Heart right ventricle (tissue), 16 donors: ENCODE measurements at regions of chr12 and their contacts with region 1.

Region 1: DNA sequence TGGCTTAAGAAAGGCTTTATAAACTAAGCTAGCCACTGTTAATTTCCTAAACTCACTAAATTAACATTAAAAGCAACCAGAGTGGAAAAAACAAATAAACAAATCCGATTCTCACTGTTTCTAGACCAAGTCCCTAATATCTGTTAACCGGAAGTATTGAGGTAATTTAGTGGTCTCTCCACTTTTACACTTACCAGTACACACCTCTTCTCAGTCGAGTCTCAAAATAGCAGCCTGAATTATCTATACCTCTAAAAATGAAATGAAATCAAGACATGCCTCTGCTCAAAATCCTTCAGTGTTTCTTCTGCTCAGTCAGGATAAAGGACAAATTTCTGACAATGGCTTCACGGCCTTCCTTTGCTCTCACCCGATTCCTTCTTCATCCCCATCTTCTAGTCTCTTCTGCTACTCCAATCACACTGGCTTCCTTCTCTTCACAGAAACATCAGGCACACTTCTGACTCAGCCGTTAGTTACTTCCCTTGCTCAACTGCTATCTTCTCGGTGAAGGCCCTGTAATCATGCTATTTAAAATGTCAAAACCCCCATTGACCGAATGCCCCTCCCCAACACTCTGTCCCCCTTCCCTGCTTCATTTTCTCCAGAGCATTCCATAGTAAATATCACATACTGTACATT is 161.3 kb downstream of the KITLG start:
- DNase-seq: no peak
- ATAC-seq: no peak
- H3K4me3 ChIP-seq: no peak overlapping the region
- H3K27ac ChIP-seq: no peak overlapping the region
- H3K4me1 ChIP-seq: peaks cover 0 to 17% (median 0%) of the 10 kb centered on the region in 9 donors
- H3K27me3 ChIP-seq: no peaks in the 10 kb centered on the region
- CTCF ChIP-seq: no peak

Region 2: DNA sequence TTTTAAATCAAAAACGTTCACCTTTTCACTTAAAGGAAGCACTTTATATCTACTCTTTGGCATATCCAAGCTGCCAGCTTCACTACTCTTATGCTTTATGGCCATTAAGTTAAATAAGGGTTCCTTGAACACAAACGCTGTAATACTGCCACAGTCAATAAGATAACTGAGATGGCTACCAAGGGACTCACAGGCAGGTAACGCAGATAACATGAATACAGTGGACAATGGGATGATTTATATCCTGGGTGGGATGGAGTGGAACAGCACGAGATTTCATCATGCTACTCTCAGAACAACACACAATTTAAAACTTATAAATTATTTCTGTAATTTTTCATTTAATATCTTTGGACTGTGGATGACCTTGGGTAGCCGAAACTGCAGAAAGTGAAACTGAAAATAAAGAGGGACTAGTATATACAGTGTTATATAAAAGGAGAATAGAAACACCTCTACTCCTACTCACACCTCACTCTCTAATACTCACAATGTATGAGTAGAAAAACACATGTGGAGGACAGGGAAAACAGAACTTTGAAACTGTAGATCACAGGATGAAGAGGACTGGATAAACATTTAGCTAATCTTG is 757.1 kb before region 1 on chr12:
- intact Hi-C with region 1: no loop called
- DNase-seq: no peak
- ATAC-seq: no peak
- H3K4me3 ChIP-seq: peak overlapping the region in 2 of 10 donors; percentile 4 to 12
- H3K27ac ChIP-seq: no peak overlapping the region
- H3K4me1 ChIP-seq: no peaks in the 10 kb centered on the region
- H3K27me3 ChIP-seq: no peaks in the 10 kb centered on the region
- CTCF ChIP-seq: no peak

Region 3: GRCh38 chr12:88310069-88310468 is 108.9 kb before region 1 on chr12:
- intact Hi-C with region 1: loop called in 1 of 10 experiments (anchors 5 kb)
- DNase-seq: peak in 1 of 2 donors; percentile 31
- ATAC-seq: peak in 7 of 8 donors; percentile 51 to 90 (median 72)
- H3K4me3 ChIP-seq: no peak overlapping the region
- H3K27ac ChIP-seq: peak overlapping the region in 9 of 10 donors; percentile 3 to 70 (median 47)
- H3K4me1 ChIP-seq: peaks cover 0 to 48% (median 10%) of the 10 kb centered on the region in 9 donors
- H3K27me3 ChIP-seq: no peaks in the 10 kb centered on the region
- CTCF ChIP-seq: no peak

Region 4: GRCh38 chr12:88393017-88393767 is 25.8 kb before region 1 on chr12:
- intact Hi-C with region 1: no loop called
- DNase-seq: no peak
- ATAC-seq: peak in 1 of 8 donors; percentile 25
- H3K4me3 ChIP-seq: no peak overlapping the region
- H3K27ac ChIP-seq: no peak overlapping the region
- H3K4me1 ChIP-seq: no peaks in the 10 kb centered on the region
- H3K27me3 ChIP-seq: no peaks in the 10 kb centered on the region
- CTCF ChIP-seq: peak in 5 of 9 donors; percentile 7 to 39 (median 19)

Region 5: DNA sequence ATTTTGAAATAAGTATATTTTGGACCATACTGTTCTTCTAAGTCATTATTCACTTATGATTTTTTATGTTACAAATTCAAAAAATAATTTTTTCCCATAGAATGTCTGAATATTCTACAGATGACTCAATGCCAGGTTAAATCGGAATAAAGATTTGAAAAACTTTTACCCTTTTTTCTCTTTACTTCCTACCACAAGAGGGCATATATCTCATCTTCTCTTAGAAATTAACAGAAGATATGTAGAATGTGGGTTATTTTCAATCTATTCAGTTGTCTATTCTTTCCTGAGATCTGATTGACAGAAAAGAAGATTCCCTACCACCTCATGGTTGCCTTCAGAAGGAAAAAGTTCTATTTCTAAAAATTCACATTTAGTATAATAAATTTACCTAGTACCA is 214.3 kb after region 1 on chr12:
- intact Hi-C with region 1: no loop called
- DNase-seq: no peak
- ATAC-seq: no peak
- H3K4me3 ChIP-seq: no peak overlapping the region
- H3K27ac ChIP-seq: no peak overlapping the region
- H3K4me1 ChIP-seq: peaks cover 0 to 8% (median 3%) of the 10 kb centered on the region in 9 donors
- H3K27me3 ChIP-seq: no peaks in the 10 kb centered on the region
- CTCF ChIP-seq: peak in 5 of 9 donors; percentile 21 to 45 (median 29)